PC-3 (cell line): ENCODE measurements at regions of chr4 and their contacts with region 1.

Region 1: DNA sequence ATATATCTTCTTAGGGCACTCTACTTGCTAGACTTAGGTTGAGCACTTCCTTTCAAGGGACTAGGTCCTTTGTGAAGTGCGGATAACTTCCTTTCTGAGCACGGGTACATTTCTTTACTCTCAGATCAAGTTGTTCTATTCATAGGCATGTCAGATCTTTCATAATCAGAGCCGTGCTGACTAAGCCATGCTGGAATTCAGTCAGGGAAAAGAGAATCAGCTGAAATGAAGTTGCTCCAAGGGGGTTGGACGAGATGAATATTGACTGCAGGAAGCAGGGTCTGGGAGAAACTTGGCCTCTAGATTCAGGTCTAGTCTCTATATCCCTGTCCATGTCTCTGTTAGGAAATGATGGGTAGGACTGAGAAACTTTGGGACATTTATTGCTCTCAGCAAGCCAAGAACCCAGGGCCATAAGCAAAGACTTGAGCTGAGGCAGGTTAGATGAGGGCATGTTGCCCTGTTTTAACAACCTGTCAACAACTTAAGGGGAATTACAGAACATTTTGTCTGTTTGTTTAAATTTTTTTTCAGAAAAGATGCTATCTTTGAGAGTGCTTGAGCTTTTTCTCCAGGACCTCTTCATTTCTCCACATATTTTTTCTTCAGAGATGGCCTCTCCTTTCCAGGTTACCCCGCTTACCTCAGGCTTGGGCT is 28.3 kb downstream of the AREG start:
- DNase-seq: peak; percentile 82
- ATAC-seq: peak; percentile 65
- H3K4me3 ChIP-seq: no peak overlapping the region
- H3K27ac ChIP-seq: 0 out of 2 replicates have a peak overlapping the region, but pooled peaks have one; percentile 4
- H3K4me1 ChIP-seq: peaks cover 14% of the 10 kb centered on the region
- H3K27me3 ChIP-seq: no peaks in the 10 kb centered on the region
- CTCF ChIP-seq: no peak

Region 2: GRCh38 chr4:74217365-74217764 is 255.9 kb before region 1 on chr4:
- CTCF ChIA-PET with region 1: no interaction called
- POLR2A ChIA-PET with region 1: interaction called, 12 read pairs
- intact Hi-C with region 1: no loop called
- DNase-seq: peak; percentile 70
- ATAC-seq: no peak
- H3K4me3 ChIP-seq: no peak overlapping the region
- H3K27ac ChIP-seq: peak overlapping the region; percentile 59
- H3K4me1 ChIP-seq: peaks cover 26% of the 10 kb centered on the region
- H3K27me3 ChIP-seq: no peaks in the 10 kb centered on the region
- CTCF ChIP-seq: no peak

Region 3: GRCh38 chr4:74733756-74734155 is 260.5 kb after region 1 on chr4:
- CTCF ChIA-PET with region 1: no interaction called
- POLR2A ChIA-PET with region 1: no interaction called
- intact Hi-C with region 1: no loop called
- DNase-seq: no peak
- ATAC-seq: no peak
- H3K4me3 ChIP-seq: no peak overlapping the region
- H3K27ac ChIP-seq: no peak overlapping the region
- H3K4me1 ChIP-seq: peaks cover 12% of the 10 kb centered on the region
- H3K27me3 ChIP-seq: no peaks in the 10 kb centered on the region
- CTCF ChIP-seq: no peak

Region 4: GRCh38 chr4:74830925-74831324 is 357.6 kb after region 1 on chr4:
- CTCF ChIA-PET with region 1: no interaction called
- POLR2A ChIA-PET with region 1: no interaction called
- intact Hi-C with region 1: no loop called
- DNase-seq: no peak
- ATAC-seq: no peak
- H3K4me3 ChIP-seq: no peak overlapping the region
- H3K27ac ChIP-seq: no peak overlapping the region
- H3K4me1 ChIP-seq: no peaks in the 10 kb centered on the region
- H3K27me3 ChIP-seq: no peaks in the 10 kb centered on the region
- CTCF ChIP-seq: peak; percentile 48